Vagina (tissue), 2 donors: ENCODE measurements at regions of chr1 and their contacts with region 1.

Region 1: GRCh38 chr1:181759481-181759880 is 276.2 kb downstream of the CACNA1E start:
- DNase-seq: no peak
- H3K4me3 ChIP-seq: no peak overlapping the region
- H3K27ac ChIP-seq: no peak overlapping the region
- H3K4me1 ChIP-seq: no peaks in the 10 kb centered on the region
- H3K27me3 ChIP-seq: no peaks in the 10 kb centered on the region
- CTCF ChIP-seq: no peak
- POLR2A ChIP-seq: no peak

Region 2: DNA sequence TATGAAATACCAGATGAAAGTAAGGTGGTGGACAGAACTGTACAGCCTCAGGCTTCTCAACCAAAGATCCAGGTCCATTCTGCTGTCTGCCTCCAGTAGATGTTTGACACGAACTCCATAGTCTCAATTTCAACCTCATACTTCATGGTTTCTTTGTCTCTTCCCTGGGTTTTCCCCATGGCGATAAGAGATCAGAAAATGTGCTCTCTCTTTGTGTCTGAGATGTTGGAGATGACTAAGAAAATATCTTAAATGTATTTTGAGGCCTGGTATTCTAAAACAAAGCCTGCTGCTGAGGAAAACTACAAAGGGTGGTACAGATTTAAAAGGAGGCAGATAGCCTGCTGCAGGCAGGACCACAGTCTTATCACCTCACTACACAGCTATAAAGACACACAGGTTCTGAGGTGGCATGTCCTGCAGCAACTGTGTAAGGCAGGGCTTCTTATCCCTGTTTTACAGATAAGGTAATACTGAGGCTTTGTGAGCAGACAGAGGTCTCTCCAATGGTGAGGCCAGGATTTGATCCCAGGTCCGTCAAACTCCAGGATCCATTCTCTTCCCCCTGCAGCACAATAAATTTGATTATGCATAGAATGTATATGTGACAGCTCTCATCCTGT is 316.1 kb before region 1 on chr1:
- intact Hi-C with region 1: no loop called
- DNase-seq: no peak
- H3K4me3 ChIP-seq: no peak overlapping the region
- H3K27ac ChIP-seq: no peak overlapping the region
- H3K4me1 ChIP-seq: no peaks in the 10 kb centered on the region
- H3K27me3 ChIP-seq: no peaks in the 10 kb centered on the region
- CTCF ChIP-seq: no peak
- POLR2A ChIP-seq: no peak

Region 3: GRCh38 chr1:181504399-181504842 is 255.1 kb before region 1 on chr1:
- intact Hi-C with region 1: no loop called
- DNase-seq: no peak
- H3K4me3 ChIP-seq: no peak overlapping the region
- H3K27ac ChIP-seq: no peak overlapping the region
- H3K4me1 ChIP-seq: no peaks in the 10 kb centered on the region
- H3K27me3 ChIP-seq: no peaks in the 10 kb centered on the region
- CTCF ChIP-seq: no peak
- POLR2A ChIP-seq: no peak

Region 4: GRCh38 chr1:181893937-181894336 is 134.5 kb after region 1 on chr1:
- intact Hi-C with region 1: loop called (anchors 5 kb)
- DNase-seq: no peak
- H3K4me3 ChIP-seq: no peak overlapping the region
- H3K27ac ChIP-seq: no peak overlapping the region
- H3K4me1 ChIP-seq: no peaks in the 10 kb centered on the region
- H3K27me3 ChIP-seq: no peaks in the 10 kb centered on the region
- CTCF ChIP-seq: no peak
- POLR2A ChIP-seq: no peak

Region 5: DNA sequence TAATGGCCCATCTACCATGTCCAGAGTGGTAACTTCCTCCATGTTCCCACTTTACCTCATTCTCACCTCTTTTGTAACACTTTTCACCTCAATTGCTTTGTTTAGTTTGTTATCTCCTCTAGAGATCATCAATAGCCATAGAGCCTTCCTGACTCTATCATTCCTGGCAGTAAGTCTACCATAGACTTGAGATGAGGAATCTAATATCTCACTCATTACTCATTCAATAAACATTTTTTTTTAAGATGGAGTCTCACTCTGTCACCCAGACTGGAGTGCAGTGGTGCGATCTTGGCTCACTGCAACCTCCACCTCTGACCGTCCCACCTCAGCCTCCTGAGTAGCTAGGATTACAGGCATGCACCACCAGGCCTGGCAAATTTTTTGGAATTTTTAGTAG is 1651.6 kb after region 1 on chr1:
- intact Hi-C with region 1: no loop called
- DNase-seq: no peak
- H3K4me3 ChIP-seq: no peak overlapping the region
- H3K27ac ChIP-seq: no peak overlapping the region
- H3K4me1 ChIP-seq: no peaks in the 10 kb centered on the region
- H3K27me3 ChIP-seq: no peaks in the 10 kb centered on the region
- CTCF ChIP-seq: no peak
- POLR2A ChIP-seq: no peak